ENCODE measurements at regions of chr5 and their contacts with region 1.

Region 1: DNA sequence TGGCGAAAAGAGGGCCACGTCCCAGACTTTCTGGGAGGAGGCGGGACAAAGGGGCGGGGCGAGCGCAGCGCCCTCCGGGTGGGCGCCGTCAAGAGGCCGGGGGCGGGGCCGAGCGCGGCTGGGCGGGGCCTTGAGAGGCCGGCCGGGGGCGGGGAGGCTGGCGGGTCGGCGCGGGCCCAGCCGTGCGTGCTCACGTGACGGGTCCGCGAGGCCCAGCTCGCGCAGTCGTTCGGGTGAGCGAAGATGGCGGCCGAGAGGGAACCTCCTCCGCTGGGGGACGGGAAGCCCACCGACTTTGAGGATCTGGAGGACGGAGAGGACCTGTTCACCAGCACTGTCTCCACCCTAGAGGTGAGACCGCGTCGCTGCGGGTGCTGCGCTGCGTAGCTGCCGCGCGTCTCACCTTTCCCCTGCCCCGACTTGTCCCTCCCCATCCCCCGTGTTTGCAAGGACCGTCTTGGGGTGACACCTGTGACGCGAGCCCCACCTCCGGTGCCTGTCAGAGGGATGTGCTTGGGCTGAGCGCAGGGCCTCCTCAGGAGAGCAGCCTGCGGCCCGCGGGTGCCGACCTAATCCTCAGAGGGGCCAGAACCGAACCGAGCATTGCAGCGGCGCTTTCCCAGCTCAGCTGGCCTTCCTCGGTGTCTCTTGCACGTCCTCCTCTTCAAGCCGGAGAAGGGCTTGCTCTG is at the start of gene SNX2:
- DNase-seq: peak; percentile 76
- ATAC-seq: peak; percentile 92
- H3K4me3 ChIP-seq: peak within 1 kb of the TSS; percentile 95 to 98 (median 96)
- H3K27ac ChIP-seq: peak within 1 kb of the TSS; percentile 74
- H3K4me1 ChIP-seq: peaks cover 54% of the 10 kb centered on the region
- H3K27me3 ChIP-seq: no peaks in the 10 kb centered on the region; a peak in 1 of 5 replicates
- CTCF ChIP-seq: peak; percentile 26
- EP300 ChIP-seq: no peak
- POLR2A ChIP-seq: peak; percentile 92 to 95
- RAD21 ChIP-seq: peak; percentile 26; the same call in 1 of the 2 replicates
- total RNA-seq, gene SNX2: 78.8 and 125 TPM in 2 replicates

Region 2: DNA sequence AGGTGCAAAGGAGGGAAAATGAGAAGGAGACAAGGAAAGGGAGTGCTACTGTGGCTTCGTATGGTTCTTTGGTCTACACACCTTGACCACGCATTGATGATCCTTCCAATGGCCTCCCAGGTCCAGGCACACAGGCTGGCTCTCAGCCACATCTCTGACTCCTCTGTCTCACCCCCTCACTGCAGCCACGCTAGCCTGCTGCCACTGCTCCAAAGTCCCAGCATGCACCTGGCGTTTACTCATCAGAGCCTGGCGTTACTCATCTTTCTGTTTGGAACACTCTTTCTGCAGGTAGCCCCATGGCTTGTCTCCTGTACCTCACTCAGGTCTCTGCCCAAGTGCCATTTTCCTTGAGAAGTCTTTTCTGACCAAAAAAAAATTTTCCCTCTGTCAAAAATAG is 267.4 kb before region 1 on chr5:
- CTCF ChIA-PET with region 1: no interaction called
- POLR2A ChIA-PET with region 1: no interaction called
- in situ Hi-C with region 1: no loop called
- intact Hi-C with region 1: no loop called
- DNase-seq: no peak
- ATAC-seq: no peak
- H3K4me3 ChIP-seq: no peak overlapping the region
- H3K27ac ChIP-seq: no peak overlapping the region
- H3K4me1 ChIP-seq: no peaks in the 10 kb centered on the region; the same call in 1 of the 2 replicates
- H3K27me3 ChIP-seq: no peaks in the 10 kb centered on the region
- CTCF ChIP-seq: no peak
- EP300 ChIP-seq: no peak
- POLR2A ChIP-seq: no peak
- RAD21 ChIP-seq: no peak

Region 3: GRCh38 chr5:122736086-122736845 is 38.7 kb before region 1 on chr5:
- CTCF ChIA-PET with region 1: no interaction called
- POLR2A ChIA-PET with region 1: no interaction called
- in situ Hi-C with region 1: no loop called
- intact Hi-C with region 1: no loop called
- DNase-seq: no peak
- ATAC-seq: no peak
- H3K4me3 ChIP-seq: no peak overlapping the region
- H3K27ac ChIP-seq: no peak overlapping the region
- H3K4me1 ChIP-seq: no peaks in the 10 kb centered on the region
- H3K27me3 ChIP-seq: no peaks in the 10 kb centered on the region; a peak in 1 of 5 replicates
- CTCF ChIP-seq: no peak
- EP300 ChIP-seq: no peak
- POLR2A ChIP-seq: no peak
- RAD21 ChIP-seq: no peak

Region 4: DNA sequence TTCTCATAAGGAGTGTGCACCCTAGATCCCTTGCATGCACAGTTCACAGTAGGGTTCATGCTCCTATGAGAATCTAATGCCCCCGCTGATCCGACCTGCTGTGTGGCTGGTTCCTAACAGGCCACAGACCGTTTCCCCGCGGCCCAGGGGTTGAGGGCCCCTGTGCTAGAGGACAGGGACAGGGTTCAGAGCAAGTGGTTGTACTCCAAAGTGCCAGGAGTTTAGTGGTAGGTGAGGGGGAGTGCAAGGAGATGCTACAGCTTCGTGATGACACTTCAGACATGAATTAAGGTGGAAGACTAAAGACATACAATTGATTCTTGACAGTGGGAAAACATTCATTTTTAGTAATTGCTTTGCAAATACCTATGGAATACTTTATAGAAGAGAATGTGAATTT is 110.9 kb after region 1 on chr5:
- CTCF ChIA-PET with region 1: no interaction called
- POLR2A ChIA-PET with region 1: no interaction called
- in situ Hi-C with region 1: no loop called
- intact Hi-C with region 1: no loop called
- DNase-seq: no peak
- ATAC-seq: peak; percentile 47; the same call in 2 of the 3 replicates
- H3K4me3 ChIP-seq: no peak overlapping the region
- H3K27ac ChIP-seq: no peak overlapping the region
- H3K4me1 ChIP-seq: no peaks in the 10 kb centered on the region
- H3K27me3 ChIP-seq: no peaks in the 10 kb centered on the region
- CTCF ChIP-seq: no peak
- EP300 ChIP-seq: no peak
- POLR2A ChIP-seq: no peak
- RAD21 ChIP-seq: no peak

Region 5: GRCh38 chr5:123036391-123037103 is 261.5 kb after region 1 on chr5 and contains the start of gene PPIC:
- CTCF ChIA-PET with region 1: no interaction called
- POLR2A ChIA-PET with region 1: no interaction called
- in situ Hi-C with region 1: no loop called
- intact Hi-C with region 1: loop called (anchors 5 kb)
- DNase-seq: peak; percentile 50
- ATAC-seq: peak; percentile 90
- H3K4me3 ChIP-seq: peak within 1 kb of the TSS; percentile 69 to 77 (median 73)
- H3K27ac ChIP-seq: no peak within 1 kb of the TSS
- H3K4me1 ChIP-seq: peaks cover 21% of the 10 kb centered on the region
- H3K27me3 ChIP-seq: no peaks in the 10 kb centered on the region
- CTCF ChIP-seq: no peak
- EP300 ChIP-seq: no peak
- POLR2A ChIP-seq: no peak
- RAD21 ChIP-seq: no peak; the same call in 1 of the 2 replicates
- total RNA-seq, gene PPIC: 9.9 and 17.2 TPM in 2 replicates